Activated naive CD4-positive, alpha-beta T cell treated with anti-CD3 and anti-CD28 coated beads, Interleukin-2, amount 10 ng/mL, durations not matched to agents 7 days and 5 days (primary cell): ENCODE measurements at regions of chr13 and their contacts with region 1.

Region 1: GRCh38 chr13:23466144-23467002 is 32.9 kb upstream of the SACS start:
- DNase-seq: peak; percentile 74
- H3K4me3 Mint-ChIP-seq: peak overlapping the region; percentile 65
- H3K27ac Mint-ChIP-seq: no peak overlapping the region
- H3K4me1 Mint-ChIP-seq: peaks cover 7% of the 10 kb centered on the region
- H3K27me3 Mint-ChIP-seq: peaks cover 26% of the 10 kb centered on the region

Region 2: GRCh38 chr13:23871616-23872220 is 405.3 kb after region 1 on chr13:
- CTCF ChIA-PET with region 1: interaction called, 16 read pairs
- DNase-seq: no peak
- H3K4me3 Mint-ChIP-seq: no peak overlapping the region
- H3K27ac Mint-ChIP-seq: no peak overlapping the region
- H3K4me1 Mint-ChIP-seq: no peaks in the 10 kb centered on the region
- H3K27me3 Mint-ChIP-seq: no peaks in the 10 kb centered on the region

Region 3: GRCh38 chr13:23888658-23889614 is 422.6 kb after region 1 on chr13 and contains the start of gene MIPEP:
- CTCF ChIA-PET with region 1: interaction called, 14 read pairs
- DNase-seq: peak; percentile 92
- H3K4me3 Mint-ChIP-seq: peak within 1 kb of the TSS; percentile 86
- H3K27ac Mint-ChIP-seq: peak within 1 kb of the TSS; percentile 77
- H3K4me1 Mint-ChIP-seq: peaks cover 26% of the 10 kb centered on the region
- H3K27me3 Mint-ChIP-seq: peaks cover 5% of the 10 kb centered on the region

Region 4: GRCh38 chr13:23899555-23899954 is 433.2 kb after region 1 on chr13:
- CTCF ChIA-PET with region 1: interaction called, 12 read pairs
- DNase-seq: peak; percentile 61
- H3K4me3 Mint-ChIP-seq: no peak overlapping the region
- H3K27ac Mint-ChIP-seq: no peak overlapping the region
- H3K4me1 Mint-ChIP-seq: peaks cover 14% of the 10 kb centered on the region
- H3K27me3 Mint-ChIP-seq: peaks cover 50% of the 10 kb centered on the region